Activated B cell treated with CpG ODN at 0.5 μM for 24 hours (primary cell): ENCODE measurements at regions of chr10 and their contacts with region 1.

Region 1: DNA sequence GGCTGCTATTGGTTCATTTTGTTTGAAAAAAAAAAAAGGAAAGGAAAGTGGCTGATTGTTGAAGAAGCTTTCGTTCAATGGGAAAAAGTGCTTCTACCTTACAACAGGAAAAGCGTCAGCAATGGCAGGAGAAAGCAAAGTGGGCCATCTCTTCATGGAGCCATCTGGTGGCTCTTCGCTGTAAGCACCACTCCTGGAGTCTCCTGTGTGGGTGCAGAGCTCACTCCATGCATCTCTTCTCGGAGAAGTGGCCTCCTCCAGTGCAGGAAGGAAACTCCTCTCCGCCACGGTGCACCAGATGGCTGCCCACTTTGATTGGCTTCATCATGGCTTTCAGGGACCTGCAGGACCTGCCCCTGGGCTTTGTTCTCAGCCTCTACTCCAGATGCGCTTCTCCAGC is 250.9 kb downstream of the PTEN start:
- DNase-seq: no peak
- ATAC-seq: peak; percentile 40
- H3K4me3 Mint-ChIP-seq: peak overlapping the region; percentile 66
- H3K27ac Mint-ChIP-seq: no peak overlapping the region
- H3K4me1 Mint-ChIP-seq: peaks cover 2% of the 10 kb centered on the region
- H3K27me3 Mint-ChIP-seq: no peaks in the 10 kb centered on the region
- CTCF ChIP-seq: no peak

Region 2: GRCh38 chr10:87817609-87818504 is 296.5 kb before region 1 on chr10 and contains the start of gene ATAD1:
- CTCF ChIA-PET with region 1: no interaction called
- POLR2A ChIA-PET with region 1: no interaction called
- intact Hi-C with region 1: loop called (anchors 2 kb)
- DNase-seq: peak; percentile 85
- ATAC-seq: peak; percentile 84
- H3K4me3 Mint-ChIP-seq: peak within 1 kb of the TSS; percentile 98
- H3K27ac Mint-ChIP-seq: peak within 1 kb of the TSS; percentile 96
- H3K4me1 Mint-ChIP-seq: peaks cover 40% of the 10 kb centered on the region
- H3K27me3 Mint-ChIP-seq: no peaks in the 10 kb centered on the region
- CTCF ChIP-seq: no peak
- total RNA-seq, gene ATAD1: 34.7 and 42.6 TPM in 2 replicates

Region 3: GRCh38 chr10:88027570-88027969 is 86.8 kb before region 1 on chr10:
- CTCF ChIA-PET with region 1: interaction called, 3 read pairs
- POLR2A ChIA-PET with region 1: no interaction called
- intact Hi-C with region 1: loop called (anchors 1 kb)
- DNase-seq: no peak
- ATAC-seq: peak; percentile 77
- H3K4me3 Mint-ChIP-seq: peak overlapping the region; percentile 39
- H3K27ac Mint-ChIP-seq: peak overlapping the region; percentile 81
- H3K4me1 Mint-ChIP-seq: peaks cover 24% of the 10 kb centered on the region
- H3K27me3 Mint-ChIP-seq: no peaks in the 10 kb centered on the region
- CTCF ChIP-seq: no peak

Region 4: DNA sequence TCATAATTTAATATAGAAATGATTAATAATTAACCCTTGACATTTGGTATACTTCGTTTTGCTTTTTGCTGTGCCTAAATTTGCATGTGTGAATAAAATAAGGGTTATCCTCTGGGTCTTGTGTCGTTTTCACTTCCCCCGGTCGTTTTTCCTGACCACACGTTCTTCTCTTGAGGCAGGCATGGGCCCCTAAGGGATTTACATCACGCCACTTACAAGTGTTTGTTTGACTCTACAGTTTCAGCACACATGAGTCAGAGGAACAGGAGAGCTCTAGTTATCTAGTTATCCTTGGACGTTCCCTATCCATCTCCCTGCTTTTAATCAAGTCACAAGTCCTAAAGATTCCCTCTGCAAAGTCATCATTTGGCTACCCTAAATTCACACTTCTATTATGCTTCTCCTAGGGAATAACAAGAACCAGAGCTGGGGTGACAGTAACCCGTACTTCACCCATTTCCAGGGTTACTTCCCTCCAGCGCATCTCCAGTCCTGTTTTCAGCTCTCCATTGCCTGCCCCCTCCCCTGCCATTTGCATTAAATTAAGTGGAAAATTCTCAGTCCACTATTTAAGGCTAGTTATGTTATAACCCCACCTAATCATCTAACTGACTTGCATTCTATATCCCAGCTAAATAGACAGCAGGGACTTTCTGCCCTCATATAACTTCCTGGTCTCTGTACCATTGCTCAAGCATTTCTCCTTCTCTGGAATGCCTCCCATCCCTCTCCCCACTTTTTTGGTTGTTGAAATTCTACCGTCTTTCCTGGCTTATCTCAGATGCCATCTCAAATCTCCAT is 44.1 kb before region 1 on chr10:
- CTCF ChIA-PET with region 1: interaction called, 13 read pairs
- POLR2A ChIA-PET with region 1: interaction called, 9 read pairs
- intact Hi-C with region 1: loop called (anchors 1 kb)
- DNase-seq: no peak
- ATAC-seq: peak; percentile 81
- H3K4me3 Mint-ChIP-seq: peak overlapping the region; percentile 69
- H3K27ac Mint-ChIP-seq: peak overlapping the region; percentile 91
- H3K4me1 Mint-ChIP-seq: peaks cover 84% of the 10 kb centered on the region
- H3K27me3 Mint-ChIP-seq: no peaks in the 10 kb centered on the region
- CTCF ChIP-seq: no peak

Region 5: GRCh38 chr10:88138319-88138848 is 24.0 kb after region 1 on chr10:
- CTCF ChIA-PET with region 1: no interaction called
- POLR2A ChIA-PET with region 1: interaction called, 3 read pairs
- intact Hi-C with region 1: loop called (anchors 2 kb)
- DNase-seq: no peak
- ATAC-seq: peak; percentile 47
- H3K4me3 Mint-ChIP-seq: no peak overlapping the region
- H3K27ac Mint-ChIP-seq: peak overlapping the region; percentile 36
- H3K4me1 Mint-ChIP-seq: peaks cover 26% of the 10 kb centered on the region
- H3K27me3 Mint-ChIP-seq: no peaks in the 10 kb centered on the region
- CTCF ChIP-seq: no peak

Region 6: DNA sequence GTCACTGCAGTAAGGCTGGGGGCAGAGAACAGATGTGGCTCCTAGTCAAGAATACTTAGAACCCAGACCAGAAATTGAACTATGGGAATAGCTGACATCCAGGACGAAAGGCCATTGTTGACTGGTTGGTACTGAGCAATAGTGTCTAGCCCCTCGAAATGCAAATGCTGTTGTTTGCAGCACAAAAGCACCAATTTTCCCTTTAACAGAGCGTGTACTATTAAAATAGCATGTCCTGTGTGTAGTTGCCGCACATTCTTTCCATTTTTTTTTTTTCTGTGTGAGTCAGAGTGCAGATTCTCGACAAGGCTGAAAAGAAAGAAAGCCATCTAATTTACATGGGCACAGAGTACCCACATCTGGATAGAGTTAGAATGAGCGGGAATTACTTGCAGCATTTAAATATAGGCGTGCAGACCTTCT is 51.5 kb after region 1 on chr10:
- CTCF ChIA-PET with region 1: no interaction called
- POLR2A ChIA-PET with region 1: no interaction called
- intact Hi-C with region 1: no loop called
- DNase-seq: no peak
- ATAC-seq: no peak
- H3K4me3 Mint-ChIP-seq: no peak overlapping the region
- H3K27ac Mint-ChIP-seq: no peak overlapping the region
- H3K4me1 Mint-ChIP-seq: peaks cover 11% of the 10 kb centered on the region
- H3K27me3 Mint-ChIP-seq: no peaks in the 10 kb centered on the region
- CTCF ChIP-seq: no peak